CD8-positive, alpha-beta T cell (primary cell): ENCODE measurements at regions of chr6 and their contacts with region 1.

Region 1: DNA sequence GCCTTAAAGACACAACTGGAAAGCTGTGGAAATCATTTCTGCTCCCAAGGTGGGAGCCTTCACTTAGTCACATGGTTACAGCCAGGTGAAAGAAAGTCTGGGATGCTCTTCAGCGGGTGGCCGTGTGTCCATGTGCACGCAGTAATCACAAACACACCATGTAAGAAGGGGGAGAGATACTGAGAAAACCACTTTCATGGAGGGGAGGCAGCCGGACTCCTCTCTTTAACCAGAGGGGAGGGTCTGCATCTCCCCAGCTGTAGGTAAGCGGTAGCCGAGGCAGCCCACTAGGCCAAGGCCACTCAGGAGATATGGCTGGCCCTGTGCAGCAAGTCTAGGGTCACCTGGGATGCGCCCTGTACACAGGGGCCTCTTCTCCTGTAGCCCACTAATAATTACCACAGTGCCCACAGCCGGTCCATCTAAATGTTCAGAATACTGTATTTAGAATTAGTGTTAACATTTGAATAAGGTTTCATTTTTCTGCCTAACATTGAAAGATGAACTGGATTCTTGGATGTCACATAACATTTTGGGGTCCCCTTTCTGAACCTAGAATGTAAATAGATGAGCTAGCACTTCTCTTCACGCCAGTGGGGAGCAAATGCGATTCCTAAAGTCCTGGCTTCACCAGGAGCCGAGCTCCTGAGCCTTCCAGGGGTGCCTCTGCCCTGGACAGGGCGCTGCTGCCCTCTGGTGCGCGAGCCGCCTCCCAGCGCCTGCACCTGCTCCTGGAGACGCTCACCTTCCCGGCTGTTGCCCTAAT is 15.9 kb downstream of the GPR31 start:
- DNase-seq: peak in 7 of 9 experiments; percentile 7 to 66 (median 41)
- ATAC-seq: peak; percentile 71
- H3K4me3 ChIP-seq: no peak overlapping the region
- H3K4me3 Mint-ChIP-seq: no peak overlapping the region
- H3K27ac ChIP-seq: no peak overlapping the region
- H3K27ac Mint-ChIP-seq: no peak overlapping the region
- H3K4me1 ChIP-seq: no peaks in the 10 kb centered on the region
- H3K4me1 Mint-ChIP-seq: peaks cover 16% of the 10 kb centered on the region
- H3K27me3 ChIP-seq: no peaks in the 10 kb centered on the region
- H3K27me3 Mint-ChIP-seq: peaks cover 8% of the 10 kb centered on the region
- CTCF ChIP-seq: peak; percentile 72

Region 2: DNA sequence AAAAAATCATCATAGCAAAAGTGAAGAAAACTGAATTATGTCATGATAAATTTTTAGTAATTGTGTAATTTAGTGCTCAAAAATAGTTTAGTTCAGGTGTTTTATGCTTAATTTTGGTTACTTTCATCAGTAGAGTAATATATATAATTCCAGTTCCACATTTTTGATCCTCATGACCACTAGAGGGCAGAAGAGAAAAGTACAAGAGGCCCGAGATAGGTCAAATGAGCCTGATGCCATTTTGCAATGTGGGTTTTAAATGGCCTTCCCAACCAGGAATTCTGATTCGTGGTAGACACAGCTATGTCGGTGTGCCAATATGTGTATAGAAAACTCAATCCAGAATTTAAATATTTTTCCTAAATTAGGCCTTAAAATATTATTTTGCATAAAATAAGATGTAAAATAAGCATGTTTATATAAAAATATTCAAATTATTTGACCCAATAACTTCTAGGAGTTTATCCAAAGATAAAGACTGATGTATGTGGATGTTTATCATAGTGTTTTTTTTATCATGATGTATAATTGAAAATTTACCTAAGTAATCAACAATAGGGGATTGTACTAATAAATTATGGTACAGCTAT is 355.1 kb before region 1 on chr6:
- CTCF ChIA-PET with region 1: interaction called, 16 read pairs
- POLR2A ChIA-PET with region 1: no interaction called
- intact Hi-C with region 1: loop called in 1 of 2 experiments (anchors 1 kb)
- DNase-seq: peak in 5 of 9 experiments; percentile 20 to 75 (median 48)
- ATAC-seq: peak; percentile 48
- H3K4me3 ChIP-seq: no peak overlapping the region
- H3K4me3 Mint-ChIP-seq: no peak overlapping the region
- H3K27ac ChIP-seq: no peak overlapping the region
- H3K27ac Mint-ChIP-seq: no peak overlapping the region
- H3K4me1 ChIP-seq: no peaks in the 10 kb centered on the region
- H3K4me1 Mint-ChIP-seq: no peaks in the 10 kb centered on the region
- H3K27me3 ChIP-seq: no peaks in the 10 kb centered on the region
- H3K27me3 Mint-ChIP-seq: peaks cover 3% of the 10 kb centered on the region
- CTCF ChIP-seq: peak; percentile 88

Region 3: DNA sequence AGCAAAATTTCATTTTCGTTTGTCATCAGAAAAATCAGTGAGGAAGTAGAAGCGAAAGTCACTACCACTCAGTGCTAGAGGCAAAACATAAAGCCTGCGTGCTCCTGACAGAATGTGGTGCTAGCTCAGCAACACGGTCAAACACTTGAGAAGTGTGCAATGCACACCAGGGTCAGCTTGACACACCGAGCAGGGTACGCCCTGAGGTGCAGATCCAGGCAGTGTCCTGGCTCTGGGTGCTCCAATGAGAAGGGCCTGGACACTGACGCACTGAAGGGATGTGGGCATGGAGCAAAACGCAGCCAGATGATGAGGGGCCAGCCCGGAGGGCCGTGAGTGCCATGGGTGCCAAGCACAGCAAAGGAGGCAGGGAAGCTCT is 191.4 kb before region 1 on chr6:
- CTCF ChIA-PET with region 1: interaction called, 4 read pairs
- POLR2A ChIA-PET with region 1: no interaction called
- intact Hi-C with region 1: loop called in 1 of 2 experiments (anchors 1 kb)
- DNase-seq: peak in 1 of 9 experiments; percentile 23
- ATAC-seq: no peak
- H3K4me3 ChIP-seq: no peak overlapping the region
- H3K4me3 Mint-ChIP-seq: peak overlapping the region; percentile 77
- H3K27ac ChIP-seq: peak overlapping the region; percentile 10 to 74
- H3K27ac Mint-ChIP-seq: peak overlapping the region; percentile 88
- H3K4me1 ChIP-seq: peaks cover 55% of the 10 kb centered on the region
- H3K4me1 Mint-ChIP-seq: peaks cover 53% of the 10 kb centered on the region
- H3K27me3 ChIP-seq: no peaks in the 10 kb centered on the region
- H3K27me3 Mint-ChIP-seq: no peaks in the 10 kb centered on the region
- CTCF ChIP-seq: no peak

Region 4: GRCh38 chr6:167079853-167080297 is 62.0 kb before region 1 on chr6:
- CTCF ChIA-PET with region 1: no interaction called
- POLR2A ChIA-PET with region 1: no interaction called
- intact Hi-C with region 1: loop called in 1 of 2 experiments (anchors 5 kb)
- DNase-seq: peak in 4 of 9 experiments; percentile 27 to 63 (median 52)
- ATAC-seq: peak; percentile 89
- H3K4me3 ChIP-seq: no peak overlapping the region
- H3K4me3 Mint-ChIP-seq: no peak overlapping the region
- H3K27ac ChIP-seq: no peak overlapping the region
- H3K27ac Mint-ChIP-seq: no peak overlapping the region
- H3K4me1 ChIP-seq: no peaks in the 10 kb centered on the region
- H3K4me1 Mint-ChIP-seq: peaks cover 3% of the 10 kb centered on the region
- H3K27me3 ChIP-seq: no peaks in the 10 kb centered on the region
- H3K27me3 Mint-ChIP-seq: no peaks in the 10 kb centered on the region
- CTCF ChIP-seq: no peak

Region 5: DNA sequence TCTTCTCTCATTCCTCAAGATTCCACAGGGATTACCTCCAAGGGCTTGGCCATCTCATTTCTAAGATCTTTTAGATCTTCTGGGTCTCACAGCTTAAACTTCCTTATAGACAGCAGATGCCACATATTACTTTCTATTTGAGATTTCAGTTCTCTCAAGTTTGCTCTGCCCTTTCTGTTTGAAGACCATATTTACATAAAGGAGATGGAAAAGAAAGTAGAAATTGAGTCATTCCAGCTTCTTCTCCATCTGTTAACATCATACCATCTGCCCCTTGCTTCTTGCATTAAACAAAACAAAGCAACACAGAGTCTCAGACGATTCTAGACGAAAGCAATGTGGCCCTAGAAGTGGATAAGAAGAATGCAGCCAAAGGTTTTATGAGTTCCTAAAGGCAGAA is 386.4 kb after region 1 on chr6:
- CTCF ChIA-PET with region 1: no interaction called
- POLR2A ChIA-PET with region 1: no interaction called
- intact Hi-C with region 1: no loop called
- DNase-seq: no peak
- ATAC-seq: no peak
- H3K4me3 ChIP-seq: no peak overlapping the region
- H3K4me3 Mint-ChIP-seq: no peak overlapping the region
- H3K27ac ChIP-seq: no peak overlapping the region
- H3K27ac Mint-ChIP-seq: no peak overlapping the region
- H3K4me1 ChIP-seq: no peaks in the 10 kb centered on the region
- H3K4me1 Mint-ChIP-seq: no peaks in the 10 kb centered on the region
- H3K27me3 ChIP-seq: no peaks in the 10 kb centered on the region
- H3K27me3 Mint-ChIP-seq: peaks cover 19% of the 10 kb centered on the region
- CTCF ChIP-seq: no peak